Activated CD4-positive, alpha-beta T cell treated with anti-CD3 and anti-CD28 coated beads, Interleukin-2, amount 10 ng/mL, durations not matched to agents 24 days and 14 days (primary cell): ENCODE measurements at regions of chr2 and their contacts with region 1.

Region 1: GRCh38 chr2:70861777-70862625 is 26.4 kb upstream of the CD207 start:
- DNase-seq: peak; percentile 92
- H3K4me3 Mint-ChIP-seq: peak overlapping the region; percentile 12
- H3K27ac Mint-ChIP-seq: no peak overlapping the region
- H3K4me1 Mint-ChIP-seq: peaks cover 9% of the 10 kb centered on the region
- H3K27me3 Mint-ChIP-seq: peaks cover 57% of the 10 kb centered on the region

Region 2: DNA sequence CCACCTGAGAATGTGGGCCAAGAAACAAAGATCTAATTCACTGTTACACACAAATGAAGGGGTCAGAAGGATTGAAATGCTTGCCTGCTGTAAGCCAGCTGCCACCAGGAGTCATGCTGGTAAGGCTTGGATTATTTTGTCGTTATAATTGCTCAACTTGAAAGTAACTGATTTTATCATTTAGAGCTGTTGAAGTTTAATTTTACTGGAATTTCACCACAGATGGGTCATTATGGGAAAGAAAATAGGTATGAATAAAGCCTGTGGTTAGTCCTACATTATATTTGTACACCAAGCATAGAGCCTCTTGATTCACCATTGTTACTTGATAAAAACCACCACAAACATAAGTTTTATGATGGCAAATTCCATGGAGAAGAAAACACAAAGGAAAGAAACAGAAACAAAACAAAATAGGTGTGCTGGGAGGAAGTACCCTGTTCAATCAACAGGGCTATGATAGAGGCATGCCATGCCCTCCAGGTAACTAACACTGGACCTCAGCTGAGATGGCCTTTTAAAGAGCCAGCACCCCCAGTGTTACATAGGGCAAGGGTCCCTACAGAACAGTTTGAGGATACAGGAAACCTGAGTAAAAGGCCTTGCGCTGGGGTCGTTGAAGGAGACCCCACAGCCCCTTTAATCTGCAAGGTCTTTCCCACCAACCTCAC is 44.6 kb before region 1 on chr2:
- intact Hi-C with region 1: loop called (anchors 5 kb)
- DNase-seq: no peak
- H3K4me3 Mint-ChIP-seq: no peak overlapping the region
- H3K27ac Mint-ChIP-seq: no peak overlapping the region
- H3K4me1 Mint-ChIP-seq: peaks cover 4% of the 10 kb centered on the region
- H3K27me3 Mint-ChIP-seq: peaks cover 3% of the 10 kb centered on the region

Region 3: GRCh38 chr2:70919672-70920366 is 57.8 kb after region 1 on chr2:
- intact Hi-C with region 1: loop called (anchors 2 kb)
- DNase-seq: peak; percentile 93
- H3K4me3 Mint-ChIP-seq: no peak overlapping the region
- H3K27ac Mint-ChIP-seq: no peak overlapping the region
- H3K4me1 Mint-ChIP-seq: peaks cover 2% of the 10 kb centered on the region
- H3K27me3 Mint-ChIP-seq: peaks cover 28% of the 10 kb centered on the region